GM12878 (cell line): ENCODE measurements at regions of chr1 and their contacts with region 1.

Region 1: DNA sequence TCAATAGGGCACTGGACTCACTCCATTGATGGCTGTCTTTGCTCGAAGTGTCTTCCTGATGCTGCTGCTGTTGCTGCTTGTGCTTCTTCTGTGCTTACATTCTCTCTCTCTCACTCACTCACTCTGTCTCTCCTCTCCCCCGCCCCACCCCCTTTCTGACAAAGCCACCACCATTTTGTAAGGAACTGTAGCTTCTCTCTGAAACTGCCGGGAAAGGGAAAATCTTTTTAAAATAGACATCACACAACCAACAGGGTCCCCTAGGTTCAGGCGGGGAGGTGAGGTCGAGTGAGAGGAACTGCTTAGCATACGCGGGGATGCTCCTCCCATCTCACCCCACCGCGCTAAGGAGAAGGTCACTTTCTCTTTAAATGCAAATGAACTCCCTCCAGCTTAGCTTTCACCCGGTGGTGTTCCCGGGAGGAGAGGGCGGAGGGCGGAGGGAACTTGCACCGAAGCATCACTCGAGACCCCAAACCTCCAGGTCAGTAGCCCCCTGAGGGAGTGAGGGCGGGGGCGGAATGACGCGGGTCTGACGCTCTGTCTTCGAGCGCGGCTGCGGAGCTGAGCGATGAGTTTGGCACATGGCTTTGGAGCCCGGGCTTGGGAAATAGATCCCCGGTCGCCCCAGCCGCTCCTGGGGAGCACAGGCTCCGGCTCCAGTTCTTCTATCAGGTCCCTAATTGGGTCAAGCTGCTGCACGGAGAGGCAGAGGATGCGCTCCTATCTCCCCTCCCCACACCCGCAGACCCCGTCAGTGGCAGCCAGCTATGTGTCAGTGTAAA is at the start of gene CCDC28B:
- DNase-seq: peak; percentile 34
- ATAC-seq: peak; percentile 66
- H3K4me3 ChIP-seq: peak within 1 kb of the TSS; percentile 90
- H3K27ac ChIP-seq: peak within 1 kb of the TSS; percentile 89
- H3K4me1 ChIP-seq: peaks cover 16% of the 10 kb centered on the region
- H3K27me3 ChIP-seq: no peaks in the 10 kb centered on the region
- CTCF ChIP-seq: no peak
- EP300 ChIP-seq: peak in 1 of 2 experiments; percentile 20; a peak in 1 of 4 replicates
- POLR2A ChIP-seq: peak; percentile 63; the same call in 1 of the 2 replicates
- RAD21 ChIP-seq: no peak
- polyA plus RNA-seq, gene CCDC28B: 10.5 to 29.8 TPM

Region 2: GRCh38 chr1:32107742-32108661 is 92.4 kb before region 1 on chr1 and contains the start of gene KPNA6:
- CTCF ChIA-PET with region 1: interaction called, 6 read pairs
- POLR2A ChIA-PET with region 1: interaction called, 16 read pairs
- RAD21 ChIA-PET with region 1: interaction called, 10 read pairs
- SMC1A ChIA-PET with region 1: interaction called, 5 read pairs
- in situ Hi-C with region 1: no loop called
- intact Hi-C with region 1: no loop called
- DNase-seq: peak; percentile 90
- ATAC-seq: peak; percentile 83
- H3K4me3 ChIP-seq: peak within 1 kb of the TSS; percentile 87
- H3K27ac ChIP-seq: peak within 1 kb of the TSS; percentile 92
- H3K4me1 ChIP-seq: peaks cover 21% of the 10 kb centered on the region
- H3K27me3 ChIP-seq: no peaks in the 10 kb centered on the region
- CTCF ChIP-seq: no peak
- EP300 ChIP-seq: no peak
- POLR2A ChIP-seq: peak; percentile 79
- RAD21 ChIP-seq: no peak
- polyA plus RNA-seq, gene KPNA6: 11.1 to 25.5 TPM

Region 3: DNA sequence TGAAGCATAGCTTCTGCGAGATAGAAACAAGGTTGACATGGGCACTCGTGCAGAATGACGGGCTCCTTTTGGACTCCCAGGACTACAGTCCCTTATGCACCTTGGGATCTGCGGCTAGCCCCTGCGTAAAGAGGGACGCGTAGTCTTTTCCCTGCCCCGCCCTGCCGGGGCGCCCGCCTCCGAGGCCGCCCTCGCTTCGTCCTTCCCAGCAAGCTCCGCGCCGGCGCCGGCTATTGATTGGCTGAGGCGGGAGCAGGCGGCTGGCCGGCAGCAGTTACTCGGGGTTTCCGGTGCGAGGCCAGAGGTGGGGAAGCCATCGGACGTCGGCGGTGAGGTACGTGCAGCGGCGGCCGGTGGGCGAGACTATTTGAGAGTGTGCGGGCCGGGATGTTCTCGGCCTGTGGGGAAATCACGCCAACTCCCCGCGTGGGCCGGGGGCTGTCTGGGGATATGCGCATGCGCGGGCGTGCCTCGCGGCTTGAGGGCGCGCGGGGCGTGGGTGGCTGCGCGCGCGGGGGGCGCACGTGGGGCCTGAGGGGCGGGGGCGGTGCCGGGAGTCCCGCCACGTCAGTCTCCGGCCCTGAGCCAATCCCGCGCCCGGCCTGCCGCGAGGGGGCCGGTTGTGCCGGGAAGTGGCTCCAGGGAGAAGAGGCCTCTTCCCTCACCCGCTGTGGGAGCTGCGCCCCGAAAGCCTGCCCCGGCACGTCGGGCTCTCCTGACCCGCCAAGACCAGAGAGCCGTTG is 20.8 kb before region 1 on chr1 and contains the start of gene TXLNA:
- CTCF ChIA-PET with region 1: interaction called, 6 read pairs
- POLR2A ChIA-PET with region 1: interaction called, 25 read pairs
- RAD21 ChIA-PET with region 1: interaction called, 22 read pairs
- SMC1A ChIA-PET with region 1: interaction called, 26 read pairs
- in situ Hi-C with region 1: no loop called
- intact Hi-C with region 1: loop called (anchors 2 kb)
- DNase-seq: peak; percentile 60
- ATAC-seq: peak; percentile 93
- H3K4me3 ChIP-seq: peak within 1 kb of the TSS; percentile 89
- H3K27ac ChIP-seq: peak within 1 kb of the TSS; percentile 85
- H3K4me1 ChIP-seq: peaks cover 17% of the 10 kb centered on the region
- H3K27me3 ChIP-seq: no peaks in the 10 kb centered on the region
- CTCF ChIP-seq: no peak
- EP300 ChIP-seq: peak in 1 of 2 experiments; percentile 33; a peak in 1 of 4 replicates
- POLR2A ChIP-seq: peak; percentile 99
- RAD21 ChIP-seq: no peak
- polyA plus RNA-seq, gene TXLNA: 7.2 to 10.3 TPM

Region 4: GRCh38 chr1:32221980-32222755 is 21.8 kb after region 1 on chr1 and contains the starts of genes EIF3I and TMEM234:
- CTCF ChIA-PET with region 1: interaction called, 4 read pairs
- POLR2A ChIA-PET with region 1: interaction called, 6 read pairs
- RAD21 ChIA-PET with region 1: interaction called, 10 read pairs
- SMC1A ChIA-PET with region 1: interaction called, 15 read pairs
- in situ Hi-C with region 1: no loop called
- intact Hi-C with region 1: no loop called
- DNase-seq: peak; percentile 60
- ATAC-seq: peak; percentile 91
- H3K4me3 ChIP-seq: peak within 1 kb of the TSS; percentile 89
- H3K27ac ChIP-seq: peak within 1 kb of the TSS; percentile 98
- H3K4me1 ChIP-seq: peaks cover 12% of the 10 kb centered on the region
- H3K27me3 ChIP-seq: no peaks in the 10 kb centered on the region
- CTCF ChIP-seq: no peak
- EP300 ChIP-seq: no peak
- POLR2A ChIP-seq: peak; percentile 90
- RAD21 ChIP-seq: no peak
- polyA plus RNA-seq, gene EIF3I: 572 to 606 TPM
- polyA plus RNA-seq, gene TMEM234: 2.9 to 4.5 TPM

Region 5: DNA sequence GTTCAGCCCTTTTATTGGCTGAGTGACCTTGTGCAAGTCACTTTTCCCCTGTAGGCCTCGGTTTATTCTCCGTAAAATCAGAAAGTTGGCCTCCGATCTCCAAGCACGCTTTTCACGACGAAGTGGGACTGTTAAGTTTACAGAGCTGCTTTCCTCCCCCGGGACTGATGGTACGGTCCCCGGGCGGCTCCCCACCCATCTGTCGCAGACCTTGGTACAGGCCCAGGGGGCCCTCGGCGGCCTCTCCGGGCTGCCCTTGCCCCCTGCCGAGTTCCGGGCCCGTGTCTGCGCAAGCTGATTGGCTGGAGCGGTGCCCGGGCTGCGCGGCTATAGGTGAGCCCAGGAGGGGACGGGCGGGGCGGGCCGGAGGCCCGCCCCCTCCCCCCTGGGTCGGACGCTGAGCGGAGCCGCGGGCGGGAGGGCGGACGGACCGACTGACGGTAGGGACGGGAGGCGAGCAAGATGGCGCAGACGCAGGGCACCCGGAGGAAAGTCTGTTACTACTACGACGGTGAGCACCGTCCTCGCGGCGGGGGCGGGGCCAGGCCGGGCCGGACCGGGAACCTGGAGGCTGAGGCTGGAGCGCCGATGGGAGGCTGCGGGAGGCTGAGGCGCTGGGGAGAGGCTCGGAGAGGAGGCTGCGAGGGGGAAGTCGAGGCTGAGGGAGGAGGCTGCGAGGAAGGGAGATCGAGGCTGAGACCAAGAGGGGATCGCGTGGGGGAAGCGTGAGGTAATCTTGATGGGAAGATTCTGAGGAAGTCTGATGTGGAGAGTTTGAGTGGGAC is 91.5 kb after region 1 on chr1 and contains the start of gene HDAC1:
- CTCF ChIA-PET with region 1: no interaction called
- POLR2A ChIA-PET with region 1: interaction called, 10 read pairs
- RAD21 ChIA-PET with region 1: interaction called, 3 read pairs
- SMC1A ChIA-PET with region 1: interaction called, 3 read pairs
- in situ Hi-C with region 1: no loop called
- intact Hi-C with region 1: no loop called
- DNase-seq: peak; percentile 83
- ATAC-seq: peak; percentile 99
- H3K4me3 ChIP-seq: peak within 1 kb of the TSS; percentile 100
- H3K27ac ChIP-seq: peak within 1 kb of the TSS; percentile 92
- H3K4me1 ChIP-seq: peaks cover 3% of the 10 kb centered on the region; the same call in 1 of the 2 replicates
- H3K27me3 ChIP-seq: no peaks in the 10 kb centered on the region
- CTCF ChIP-seq: no peak
- EP300 ChIP-seq: peak in 1 of 2 experiments; percentile 34; a peak in 1 of 4 replicates
- POLR2A ChIP-seq: peak; percentile 94
- RAD21 ChIP-seq: no peak
- polyA plus RNA-seq, gene HDAC1: 150 to 151 TPM

Region 6: GRCh38 chr1:32321712-32322291 is 121.4 kb after region 1 on chr1:
- CTCF ChIA-PET with region 1: interaction called, 4 read pairs
- POLR2A ChIA-PET with region 1: interaction called, 5 read pairs
- RAD21 ChIA-PET with region 1: interaction called, 3 read pairs
- SMC1A ChIA-PET with region 1: interaction called, 3 read pairs
- in situ Hi-C with region 1: no loop called
- intact Hi-C with region 1: loop called (anchors 5 kb)
- DNase-seq: no peak
- ATAC-seq: peak; percentile 9; the same call in 1 of the 3 replicates
- H3K4me3 ChIP-seq: no peak overlapping the region
- H3K27ac ChIP-seq: peak overlapping the region; percentile 69
- H3K4me1 ChIP-seq: peaks cover 54% of the 10 kb centered on the region
- H3K27me3 ChIP-seq: no peaks in the 10 kb centered on the region
- CTCF ChIP-seq: no peak
- EP300 ChIP-seq: no peak
- POLR2A ChIP-seq: no peak
- RAD21 ChIP-seq: no peak

Region 7: GRCh38 chr1:32413507-32414185 is 213.2 kb after region 1 on chr1:
- CTCF ChIA-PET with region 1: no interaction called
- POLR2A ChIA-PET with region 1: no interaction called
- RAD21 ChIA-PET with region 1: no interaction called
- SMC1A ChIA-PET with region 1: no interaction called
- in situ Hi-C with region 1: no loop called
- intact Hi-C with region 1: loop called (anchors 5 kb)
- DNase-seq: peak; percentile 48
- ATAC-seq: peak; percentile 99
- H3K4me3 ChIP-seq: no peak overlapping the region
- H3K27ac ChIP-seq: no peak overlapping the region
- H3K4me1 ChIP-seq: no peaks in the 10 kb centered on the region; the same call in 1 of the 2 replicates
- H3K27me3 ChIP-seq: no peaks in the 10 kb centered on the region; a peak in 1 of 4 replicates
- CTCF ChIP-seq: peak; percentile 76 to 82 (median 78)
- EP300 ChIP-seq: no peak
- POLR2A ChIP-seq: no peak
- RAD21 ChIP-seq: peak; percentile 86